ENCODE measurements at regions of chr2 and their contacts with region 1.

Region 1: DNA sequence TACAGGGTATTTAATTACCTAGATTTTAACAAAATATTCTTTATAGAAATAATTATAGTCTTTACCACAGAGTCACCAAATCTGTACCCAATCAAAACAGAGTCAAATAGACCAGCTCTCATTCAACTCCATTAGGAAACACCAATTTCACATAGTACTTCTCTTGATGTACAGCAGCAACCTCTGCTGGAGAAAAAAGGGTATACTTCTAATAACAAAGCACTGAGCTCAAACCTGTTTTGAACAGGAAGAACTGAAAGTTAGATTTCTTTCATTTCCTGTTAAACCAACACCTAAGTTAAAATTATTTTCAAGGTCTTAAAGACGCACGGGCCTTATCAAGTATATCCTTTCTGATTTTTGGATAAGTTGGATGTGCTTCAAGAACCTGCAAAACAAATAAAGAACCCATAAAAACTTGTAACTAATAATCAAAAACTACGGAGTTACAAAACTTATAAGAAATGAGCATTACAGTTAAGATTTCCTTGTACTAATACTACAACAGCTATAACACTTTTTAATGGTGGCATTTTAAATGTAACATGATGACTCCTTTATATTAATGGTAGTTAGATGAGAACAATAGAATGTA is 79.0 kb downstream of the TTC21B start:
- DNase-seq: no peak
- ATAC-seq: peak in 3 of 4 donors; percentile 42 to 71 (median 63)
- H3K4me3 ChIP-seq: no peak overlapping the region
- H3K27ac ChIP-seq: no peak overlapping the region
- H3K4me1 ChIP-seq: peaks cover 0 to 18% (median 0%) of the 10 kb centered on the region in 12 donors
- H3K27me3 ChIP-seq: no peaks in the 10 kb centered on the region
- CTCF ChIP-seq: peak; percentile 34 to 78 (median 62)
- POLR2A ChIP-seq: no peak

Region 2: DNA sequence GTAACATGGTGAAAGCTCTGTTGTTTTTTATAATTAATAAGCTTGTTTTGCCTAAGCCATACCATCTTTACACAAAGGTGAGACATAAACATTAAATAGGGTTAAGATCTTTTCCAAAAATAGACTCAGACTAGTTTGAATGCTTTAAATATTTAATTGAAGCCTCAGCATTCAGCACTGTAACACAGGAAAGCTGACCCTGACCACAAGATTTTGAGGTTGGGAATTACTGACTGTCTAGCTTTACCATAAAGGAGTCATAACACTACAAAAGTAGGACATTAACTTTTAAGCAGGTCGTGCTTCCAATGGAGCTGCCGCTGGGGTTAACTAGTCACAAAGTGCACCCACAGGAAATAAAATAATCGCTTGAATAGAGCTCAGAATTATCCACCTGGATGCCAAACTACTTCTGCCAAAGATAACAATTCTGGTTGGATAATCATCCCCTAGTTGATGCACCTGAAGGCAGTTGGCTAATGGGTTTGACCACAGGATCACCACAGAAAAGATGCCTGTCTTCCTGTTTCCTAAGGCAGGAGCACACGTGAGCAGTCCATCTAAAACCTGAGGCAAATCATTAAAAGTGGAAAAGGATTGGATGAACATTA is 1139.1 kb before region 1 on chr2:
- intact Hi-C with region 1: no loop called
- DNase-seq: no peak
- ATAC-seq: no peak
- H3K4me3 ChIP-seq: no peak overlapping the region
- H3K27ac ChIP-seq: no peak overlapping the region
- H3K4me1 ChIP-seq: peaks cover 0 to 45% (median 20%) of the 10 kb centered on the region in 12 donors
- H3K27me3 ChIP-seq: no peaks in the 10 kb centered on the region
- CTCF ChIP-seq: no peak
- POLR2A ChIP-seq: no peak

Region 3: DNA sequence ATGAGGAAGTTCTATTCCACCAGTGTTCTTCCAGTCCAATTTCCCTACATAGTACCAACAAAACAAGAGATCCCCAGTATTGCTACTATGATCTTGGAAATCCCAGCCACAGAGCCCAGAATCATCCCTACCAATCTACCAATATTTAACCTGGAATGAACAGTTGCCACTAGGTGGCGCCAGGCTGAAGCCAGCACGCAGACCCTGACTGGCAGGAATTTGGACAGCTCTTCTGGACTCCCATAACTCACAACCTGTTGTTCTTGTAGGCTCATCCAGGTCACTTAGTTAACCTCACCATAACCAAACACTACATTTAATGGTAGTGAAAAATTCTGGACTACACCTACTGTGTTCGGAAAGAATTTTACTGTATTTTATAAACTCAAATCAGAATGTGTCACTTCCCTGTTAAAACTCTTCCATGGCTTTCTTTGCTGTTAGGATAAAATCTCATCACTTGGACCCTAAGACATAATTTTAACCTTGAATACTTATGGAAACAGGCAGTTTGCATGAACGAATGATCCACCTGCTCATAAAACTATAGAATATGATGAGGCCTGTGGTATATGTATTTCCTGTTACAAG is 859.4 kb before region 1 on chr2:
- intact Hi-C with region 1: loop called in 1 of 10 experiments (anchors 10 kb)
- DNase-seq: peak; percentile 50 to 68 (median 64)
- ATAC-seq: peak; percentile 42 to 69 (median 64)
- H3K4me3 ChIP-seq: no peak overlapping the region
- H3K27ac ChIP-seq: no peak overlapping the region
- H3K4me1 ChIP-seq: peaks cover 0 to 6% (median 0%) of the 10 kb centered on the region in 12 donors
- H3K27me3 ChIP-seq: peaks cover 0 to 8% (median 0%) of the 10 kb centered on the region in 9 donors
- CTCF ChIP-seq: peak; percentile 73 to 90 (median 86)
- POLR2A ChIP-seq: no peak

Region 4: GRCh38 chr2:165239230-165239629 is 635.3 kb before region 1 on chr2 and contains the start of gene SCN2A:
- intact Hi-C with region 1: loop called in 1 of 10 experiments (anchors 5 kb)
- DNase-seq: no peak
- ATAC-seq: peak in 1 of 4 donors; percentile 53
- H3K4me3 ChIP-seq: no peak within 1 kb of the TSS
- H3K27ac ChIP-seq: no peak within 1 kb of the TSS
- H3K4me1 ChIP-seq: no peaks in the 10 kb centered on the region
- H3K27me3 ChIP-seq: peaks cover 0 to 4% (median 0%) of the 10 kb centered on the region in 9 donors
- CTCF ChIP-seq: peak; percentile 57 to 76 (median 66)
- POLR2A ChIP-seq: no peak
- total RNA-seq, gene SCN2A: 0.04 to 0.45 (median 0.17) TPM in 5 of 9 donors, not detected in the others

Region 5: GRCh38 chr2:165920748-165921147 is 46.2 kb after region 1 on chr2:
- intact Hi-C with region 1: no loop called
- DNase-seq: no peak
- ATAC-seq: no peak
- H3K4me3 ChIP-seq: no peak overlapping the region
- H3K27ac ChIP-seq: no peak overlapping the region
- H3K4me1 ChIP-seq: no peaks in the 10 kb centered on the region
- H3K27me3 ChIP-seq: no peaks in the 10 kb centered on the region
- CTCF ChIP-seq: no peak
- POLR2A ChIP-seq: no peak